PC-9 (cell line): ENCODE measurements at regions of chr2 and their contacts with region 1.

Region 1: DNA sequence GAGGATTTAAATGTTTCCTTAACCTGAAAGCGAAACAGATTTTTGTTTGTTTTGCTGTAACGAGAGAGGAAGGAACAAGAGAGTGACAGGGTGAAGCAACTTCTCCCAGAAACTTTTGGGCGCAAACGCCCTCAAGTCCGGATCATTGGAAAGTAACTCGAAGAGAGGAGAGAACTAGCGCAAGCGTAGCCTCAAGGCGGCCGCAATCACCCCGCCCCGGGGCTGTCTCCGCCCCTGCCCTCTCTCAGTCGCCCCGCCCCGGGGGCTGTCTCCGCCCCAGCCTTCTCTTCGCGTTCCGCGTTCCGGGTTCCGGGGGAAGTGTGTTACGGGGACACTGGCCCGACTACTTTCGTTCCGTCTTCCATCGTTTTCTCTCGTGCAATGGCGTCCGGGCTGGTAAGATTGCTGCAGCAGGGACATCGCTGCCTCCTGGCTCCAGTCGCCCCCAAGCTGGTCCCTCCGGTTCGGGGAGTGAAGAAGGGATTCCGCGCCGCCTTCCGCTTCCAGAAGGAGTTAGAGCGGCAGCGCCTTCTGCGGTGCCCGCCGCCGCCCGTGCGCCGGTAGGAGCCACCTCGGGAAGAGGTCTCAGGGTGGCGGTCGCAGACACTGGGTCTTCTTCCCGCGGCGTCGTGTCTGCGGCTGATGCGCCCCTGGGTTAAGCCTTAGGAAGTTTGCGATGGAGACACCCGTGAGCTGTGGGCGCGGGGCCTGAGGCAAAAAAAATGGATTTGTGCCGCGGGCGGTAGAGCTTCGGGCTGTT is at the start of gene MRPL44:
- DNase-seq: peak; percentile 92 to 100
- H3K4me3 ChIP-seq: peak within 1 kb of the TSS; percentile 81
- H3K27ac ChIP-seq: peak within 1 kb of the TSS; percentile 73
- H3K4me1 ChIP-seq: peaks cover 37% of the 10 kb centered on the region
- H3K27me3 ChIP-seq: no peaks in the 10 kb centered on the region
- CTCF ChIP-seq: 0 out of 2 replicates have a peak, but pooled peaks have one; percentile 7
- total RNA-seq, gene MRPL44: 66.4 and 76.6 TPM in 2 replicates

Region 2: DNA sequence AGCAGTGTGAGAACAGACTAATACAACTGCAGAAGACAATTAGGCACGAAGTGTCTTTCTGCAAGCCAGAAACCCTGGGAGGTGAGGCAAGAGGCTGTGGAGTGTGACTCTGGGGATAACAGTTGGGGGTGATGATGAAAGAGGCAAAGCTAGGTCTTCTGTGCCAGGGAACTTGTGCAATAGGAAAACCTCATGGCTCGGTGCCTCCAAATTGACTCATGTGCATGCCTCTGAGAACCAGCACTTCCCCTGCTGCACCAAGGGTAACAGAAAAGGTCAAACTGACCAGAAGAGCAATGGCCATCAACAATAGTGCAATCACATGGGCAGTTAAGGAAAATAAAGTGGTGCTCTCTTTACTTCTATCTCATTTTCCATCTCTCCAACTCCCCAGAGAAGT is 491.5 kb before region 1 on chr2:
- CTCF ChIA-PET with region 1: no interaction called
- POLR2A ChIA-PET with region 1: no interaction called
- intact Hi-C with region 1: loop called (anchors 10 kb)
- DNase-seq: peak; percentile 80 to 93
- H3K4me3 ChIP-seq: no peak overlapping the region
- H3K27ac ChIP-seq: peak overlapping the region; percentile 23
- H3K4me1 ChIP-seq: peaks cover 24% of the 10 kb centered on the region
- H3K27me3 ChIP-seq: no peaks in the 10 kb centered on the region
- CTCF ChIP-seq: no peak

Region 3: GRCh38 chr2:223674998-223675609 is 282.2 kb before region 1 on chr2:
- CTCF ChIA-PET with region 1: no interaction called
- POLR2A ChIA-PET with region 1: no interaction called
- intact Hi-C with region 1: loop called (anchors 2 kb)
- DNase-seq: peak; percentile 50 to 64
- H3K4me3 ChIP-seq: no peak overlapping the region
- H3K27ac ChIP-seq: no peak overlapping the region
- H3K4me1 ChIP-seq: no peaks in the 10 kb centered on the region
- H3K27me3 ChIP-seq: no peaks in the 10 kb centered on the region
- CTCF ChIP-seq: peak; percentile 94

Region 4: GRCh38 chr2:223692191-223692947 is 264.9 kb before region 1 on chr2:
- CTCF ChIA-PET with region 1: no interaction called
- POLR2A ChIA-PET with region 1: no interaction called
- intact Hi-C with region 1: loop called (anchors 5 kb)
- DNase-seq: peak in 1 of 2 experiments; percentile 60
- H3K4me3 ChIP-seq: no peak overlapping the region
- H3K27ac ChIP-seq: no peak overlapping the region
- H3K4me1 ChIP-seq: peaks cover 15% of the 10 kb centered on the region
- H3K27me3 ChIP-seq: no peaks in the 10 kb centered on the region
- CTCF ChIP-seq: peak; percentile 79

Region 5: DNA sequence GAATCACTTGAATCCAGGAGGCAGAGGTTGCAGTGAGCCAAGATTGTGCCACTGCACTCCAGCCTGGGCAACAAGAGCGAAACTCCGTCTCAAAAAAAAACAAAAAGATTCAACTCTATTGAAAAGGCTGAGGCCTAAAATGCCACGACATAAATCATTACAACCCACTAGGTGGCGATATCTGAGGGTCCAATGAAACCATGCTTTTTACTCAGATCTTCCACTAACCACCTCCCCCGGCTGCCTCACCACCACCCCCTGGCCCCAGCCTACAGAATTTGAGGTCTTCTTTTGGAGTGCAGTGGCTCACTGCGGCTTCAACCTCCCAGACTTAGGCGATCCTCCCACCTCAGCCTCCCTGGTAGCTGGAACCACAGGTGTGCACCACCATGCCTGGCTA is 177.4 kb before region 1 on chr2:
- CTCF ChIA-PET with region 1: interaction called, 5 read pairs
- POLR2A ChIA-PET with region 1: no interaction called
- intact Hi-C with region 1: loop called (anchors 5 kb)
- DNase-seq: peak; percentile 58 to 69
- H3K4me3 ChIP-seq: no peak overlapping the region
- H3K27ac ChIP-seq: no peak overlapping the region
- H3K4me1 ChIP-seq: no peaks in the 10 kb centered on the region
- H3K27me3 ChIP-seq: no peaks in the 10 kb centered on the region
- CTCF ChIP-seq: peak; percentile 84

Region 6: GRCh38 chr2:223944703-223945531 is 12.4 kb before region 1 on chr2 and contains the start of gene WDFY1:
- CTCF ChIA-PET with region 1: no interaction called
- POLR2A ChIA-PET with region 1: interaction called, 3 read pairs
- intact Hi-C with region 1: loop called (anchors 1 kb)
- DNase-seq: peak; percentile 77 to 94
- H3K4me3 ChIP-seq: peak within 1 kb of the TSS; percentile 74
- H3K27ac ChIP-seq: 0 out of 2 replicates have a peak within 1 kb of the TSS, but pooled peaks have one; percentile 1
- H3K4me1 ChIP-seq: peaks cover 42% of the 10 kb centered on the region
- H3K27me3 ChIP-seq: no peaks in the 10 kb centered on the region
- CTCF ChIP-seq: no peak
- total RNA-seq, gene WDFY1: 81.9 and 84.4 TPM in 2 replicates

Region 7: GRCh38 chr2:224009605-224010315 is 52.5 kb after region 1 on chr2:
- CTCF ChIA-PET with region 1: no interaction called
- POLR2A ChIA-PET with region 1: no interaction called
- intact Hi-C with region 1: no loop called
- DNase-seq: peak in 1 of 2 experiments; percentile 55
- H3K4me3 ChIP-seq: no peak overlapping the region
- H3K27ac ChIP-seq: peak overlapping the region; percentile 39
- H3K4me1 ChIP-seq: peaks cover 20% of the 10 kb centered on the region
- H3K27me3 ChIP-seq: no peaks in the 10 kb centered on the region
- CTCF ChIP-seq: no peak

Region 8: GRCh38 chr2:224086226-224086914 is 129.1 kb after region 1 on chr2:
- CTCF ChIA-PET with region 1: no interaction called
- POLR2A ChIA-PET with region 1: no interaction called
- intact Hi-C with region 1: no loop called
- DNase-seq: peak; percentile 70 to 99
- H3K4me3 ChIP-seq: peak overlapping the region; percentile 0; the same call in 1 of the 2 replicates
- H3K27ac ChIP-seq: peak overlapping the region; percentile 92
- H3K4me1 ChIP-seq: peaks cover 42% of the 10 kb centered on the region
- H3K27me3 ChIP-seq: no peaks in the 10 kb centered on the region
- CTCF ChIP-seq: no peak